ENCODE measurements at regions of chr7 and their contacts with region 1.

Region 1: DNA sequence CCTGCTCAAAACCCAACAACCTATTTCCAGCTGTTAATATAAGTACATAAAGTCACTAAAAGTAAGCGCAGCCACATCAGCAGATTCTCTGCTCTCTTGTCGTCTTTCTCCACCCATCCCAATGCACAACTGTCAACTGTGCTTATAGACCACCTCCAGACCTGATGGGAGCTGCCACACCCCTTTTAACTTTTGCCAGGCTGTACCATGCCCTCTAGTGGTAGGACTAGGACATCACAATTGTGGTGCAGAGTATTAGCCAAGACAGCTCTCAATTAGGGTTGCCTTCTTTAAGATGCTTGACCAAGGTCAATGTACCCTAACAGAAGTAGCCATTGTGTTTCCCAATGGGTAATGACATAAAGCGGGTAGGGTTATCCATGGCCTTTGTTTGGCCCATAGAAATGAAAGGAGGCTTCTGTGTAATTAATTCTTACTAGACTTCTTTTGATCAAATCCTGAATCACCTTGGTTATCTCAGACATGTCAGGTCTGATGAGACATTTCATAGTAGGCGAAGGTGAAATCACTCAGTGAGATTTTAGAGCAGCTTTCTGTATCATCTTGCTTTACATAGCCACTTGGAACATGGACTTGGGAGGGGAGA is 68.1 kb downstream of the SCRN1 start:
- DNase-seq: peak in 1 of 5 donors; percentile 56
- H3K4me3 ChIP-seq: no peak overlapping the region
- H3K27ac ChIP-seq: no peak overlapping the region
- H3K4me1 ChIP-seq: no peaks in the 10 kb centered on the region
- H3K27me3 ChIP-seq: no peaks in the 10 kb centered on the region
- CTCF ChIP-seq: peak; percentile 67 to 84 (median 81)
- EP300 ChIP-seq: no peak
- POLR2A ChIP-seq: no peak

Region 2: DNA sequence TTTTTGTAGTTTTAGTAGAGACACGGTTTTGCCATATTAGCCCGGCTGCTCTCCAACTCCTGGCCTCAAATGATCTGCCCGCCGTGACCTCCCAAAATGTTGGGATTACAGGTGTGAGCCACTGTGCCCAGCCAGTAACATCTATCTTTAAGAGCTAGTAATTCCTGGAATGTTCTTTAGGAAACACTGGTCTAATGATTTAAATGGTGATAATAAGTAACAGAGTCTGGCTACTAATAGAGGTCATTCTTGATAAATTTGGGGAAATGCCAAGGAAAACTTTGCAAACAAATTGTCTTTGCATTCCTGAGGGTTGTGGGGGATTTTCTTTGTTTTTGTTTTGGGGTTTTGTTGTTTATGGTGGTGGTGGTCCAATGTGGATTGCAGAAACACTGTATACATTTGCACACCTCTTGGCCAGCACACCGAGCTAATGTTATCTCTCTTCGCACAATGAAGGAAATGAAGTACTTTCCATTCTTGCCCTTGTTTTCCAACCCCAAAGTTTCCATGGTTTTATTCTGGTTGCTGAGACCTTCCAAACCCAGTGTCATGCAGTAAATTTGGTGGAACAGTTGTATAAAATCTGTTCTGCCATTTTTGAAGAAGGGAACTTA is 166.5 kb before region 1 on chr7:
- intact Hi-C with region 1: loop called in 3 of 4 experiments (anchors 5 to 10 kb)
- DNase-seq: no peak
- H3K4me3 ChIP-seq: no peak overlapping the region
- H3K27ac ChIP-seq: no peak overlapping the region
- H3K4me1 ChIP-seq: peaks cover 5% of the 10 kb centered on the region
- H3K27me3 ChIP-seq: no peaks in the 10 kb centered on the region
- CTCF ChIP-seq: no peak
- EP300 ChIP-seq: no peak
- POLR2A ChIP-seq: no peak

Region 3: GRCh38 chr7:29811586-29811985 is 109.9 kb before region 1 on chr7:
- intact Hi-C with region 1: loop called in 1 of 4 experiments (anchors 5 kb)
- DNase-seq: peak in 1 of 5 donors; percentile 32
- H3K4me3 ChIP-seq: no peak overlapping the region
- H3K27ac ChIP-seq: peak overlapping the region in 1 of 2 donors; percentile 20
- H3K4me1 ChIP-seq: peaks cover 14% of the 10 kb centered on the region
- H3K27me3 ChIP-seq: no peaks in the 10 kb centered on the region
- CTCF ChIP-seq: no peak
- EP300 ChIP-seq: no peak
- POLR2A ChIP-seq: no peak

Measured in ovary (tissue), 10 donors.